Psoas muscle (tissue), 8 donors: ENCODE measurements at regions of chr22 and their contacts with region 1.

Region 1: GRCh38 chr22:31970490-31971444 is 26.4 kb downstream of the YWHAH start:
- DNase-seq: peak; percentile 78 to 90
- ATAC-seq: peak; percentile 93 to 99 (median 96)
- H3K4me3 ChIP-seq: peak overlapping the region; percentile 67
- H3K27ac ChIP-seq: no peak overlapping the region
- H3K4me1 ChIP-seq: peaks cover 5% of the 10 kb centered on the region
- H3K27me3 ChIP-seq: no peaks in the 10 kb centered on the region
- CTCF ChIP-seq: peak; percentile 93

Region 2: GRCh38 chr22:32202539-32203180 is 231.9 kb after region 1 on chr22:
- intact Hi-C with region 1: loop called in 1 of 2 experiments (anchors 10 kb)
- DNase-seq: no peak
- ATAC-seq: peak in 3 of 4 donors; percentile 52 to 75 (median 56)
- H3K4me3 ChIP-seq: peak overlapping the region; percentile 1
- H3K27ac ChIP-seq: no peak overlapping the region
- H3K4me1 ChIP-seq: no peaks in the 10 kb centered on the region
- H3K27me3 ChIP-seq: peaks cover 0 to 25% (median 6%) of the 10 kb centered on the region in 3 donors
- CTCF ChIP-seq: peak; percentile 39